Heart left ventricle (tissue), 16 donors: ENCODE measurements at regions of chr12 and their contacts with region 1.

Region 1: GRCh38 chr12:32918890-32919801 is 22.6 kb upstream of the PKP2 start:
- DNase-seq: no peak
- ATAC-seq: peak in 3 of 4 donors; percentile 50 to 73 (median 71)
- H3K4me3 ChIP-seq: no peak overlapping the region
- H3K27ac ChIP-seq: no peak overlapping the region
- H3K4me1 ChIP-seq: no peaks in the 10 kb centered on the region
- H3K27me3 ChIP-seq: no peaks in the 10 kb centered on the region
- CTCF ChIP-seq: peak in 11 of 12 donors; percentile 34 to 65 (median 51)
- POLR2A ChIP-seq: no peak

Region 2: GRCh38 chr12:32809846-32810245 is 109.3 kb before region 1 on chr12:
- intact Hi-C with region 1: loop called in 1 of 10 experiments (anchors 10 kb)
- DNase-seq: no peak
- ATAC-seq: peak; percentile 76 to 86 (median 82)
- H3K4me3 ChIP-seq: no peak overlapping the region
- H3K27ac ChIP-seq: peak overlapping the region in 9 of 12 donors; percentile 6 to 81 (median 73)
- H3K4me1 ChIP-seq: peaks cover 0 to 39% (median 7%) of the 10 kb centered on the region in 12 donors
- H3K27me3 ChIP-seq: no peaks in the 10 kb centered on the region
- CTCF ChIP-seq: no peak
- POLR2A ChIP-seq: no peak

Region 3: GRCh38 chr12:33187435-33187834 is 268.3 kb after region 1 on chr12:
- intact Hi-C with region 1: no loop called
- DNase-seq: no peak
- ATAC-seq: no peak
- H3K4me3 ChIP-seq: no peak overlapping the region
- H3K27ac ChIP-seq: no peak overlapping the region
- H3K4me1 ChIP-seq: no peaks in the 10 kb centered on the region
- H3K27me3 ChIP-seq: no peaks in the 10 kb centered on the region
- CTCF ChIP-seq: no peak
- POLR2A ChIP-seq: no peak